ENCODE measurements at regions of chrX and their contacts with region 1.

Region 1: DNA sequence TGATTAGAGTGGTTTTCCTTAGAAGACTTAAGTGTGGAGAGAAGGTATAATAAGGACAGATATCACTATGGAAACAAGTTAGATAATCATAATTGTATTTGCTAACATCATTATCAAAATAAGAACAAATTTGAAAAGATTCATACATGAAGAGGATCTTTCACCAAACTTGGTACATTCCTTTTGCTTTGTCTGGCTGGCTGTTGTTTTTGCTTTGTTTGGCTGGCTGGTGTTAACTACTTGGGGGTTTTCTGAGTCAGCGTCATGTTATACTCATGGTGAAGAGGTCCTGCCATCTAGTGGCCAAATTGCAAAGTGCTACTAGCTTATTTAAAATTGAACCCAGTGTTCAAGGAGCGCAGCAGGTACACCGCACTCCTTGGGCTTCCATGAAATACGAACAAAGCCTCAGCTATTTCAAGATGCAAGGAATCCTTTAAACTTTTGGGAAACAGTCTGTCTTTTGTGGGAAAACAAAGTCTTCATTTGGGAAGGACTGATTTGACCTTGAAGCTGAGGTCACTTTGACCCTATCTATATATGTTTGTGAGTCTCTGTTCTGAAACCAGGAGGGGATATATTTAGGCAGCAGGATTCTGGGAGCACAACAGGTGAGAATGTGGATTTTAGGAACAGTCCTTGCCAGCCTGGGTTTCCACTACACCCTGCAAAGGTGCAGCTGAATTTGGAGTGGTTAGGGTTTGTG is 129.7 kb downstream of the PLS3 start:
- DNase-seq: peak; percentile 53
- H3K4me3 Mint-ChIP-seq: no peak overlapping the region
- H3K27ac Mint-ChIP-seq: no peak overlapping the region
- H3K4me1 Mint-ChIP-seq: no peaks in the 10 kb centered on the region
- H3K27me3 Mint-ChIP-seq: no peaks in the 10 kb centered on the region

Region 2: DNA sequence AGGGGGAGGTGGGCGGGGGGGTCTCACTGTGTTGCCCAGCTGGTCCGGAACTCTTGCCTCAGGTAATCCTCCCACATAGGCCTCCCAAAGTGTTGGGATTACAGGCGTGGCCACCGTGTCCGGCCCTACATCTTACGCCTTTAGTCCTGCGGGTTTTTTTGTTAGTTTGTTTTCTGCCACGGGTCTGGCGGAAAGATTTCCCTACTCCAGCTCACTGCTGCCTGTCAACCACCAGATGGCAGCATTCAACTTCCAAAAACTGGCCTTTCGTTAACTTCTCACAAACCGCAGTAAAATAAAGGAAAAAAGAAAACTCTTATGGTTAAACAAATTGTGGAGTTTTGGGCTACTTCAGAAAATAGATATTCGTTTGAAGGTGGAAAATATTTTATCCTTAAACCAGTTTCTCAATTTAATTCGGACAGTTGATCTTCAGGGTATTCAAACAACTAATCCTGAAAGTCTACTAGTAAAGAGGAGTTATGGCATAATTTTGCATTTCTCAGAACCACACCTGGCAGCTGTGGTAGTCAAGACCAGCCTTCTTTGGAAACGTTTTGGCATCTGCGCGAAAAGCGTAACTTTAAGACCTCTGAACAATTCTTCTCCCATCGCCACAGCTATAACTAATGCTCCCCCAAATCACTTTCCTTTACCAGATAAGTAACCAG is 360.0 kb before region 1 on chrX:
- CTCF ChIA-PET with region 1: interaction called, 3 read pairs
- intact Hi-C with region 1: loop called (anchors 1 kb)
- DNase-seq: peak; percentile 17
- H3K4me3 Mint-ChIP-seq: no peak overlapping the region
- H3K27ac Mint-ChIP-seq: no peak overlapping the region
- H3K4me1 Mint-ChIP-seq: no peaks in the 10 kb centered on the region
- H3K27me3 Mint-ChIP-seq: no peaks in the 10 kb centered on the region

Region 3: GRCh38 chrX:115650916-115651315 is 39.7 kb before region 1 on chrX:
- CTCF ChIA-PET with region 1: interaction called, 12 read pairs
- intact Hi-C with region 1: loop called (anchors 1 kb)
- DNase-seq: peak; percentile 35
- H3K4me3 Mint-ChIP-seq: no peak overlapping the region
- H3K27ac Mint-ChIP-seq: no peak overlapping the region
- H3K4me1 Mint-ChIP-seq: no peaks in the 10 kb centered on the region
- H3K27me3 Mint-ChIP-seq: no peaks in the 10 kb centered on the region

Region 4: GRCh38 chrX:116239944-116240840 is 549.5 kb after region 1 on chrX:
- CTCF ChIA-PET with region 1: no interaction called
- intact Hi-C with region 1: no loop called
- DNase-seq: no peak
- H3K4me3 Mint-ChIP-seq: no peak overlapping the region
- H3K27ac Mint-ChIP-seq: no peak overlapping the region
- H3K4me1 Mint-ChIP-seq: no peaks in the 10 kb centered on the region
- H3K27me3 Mint-ChIP-seq: no peaks in the 10 kb centered on the region

Measured in activated naive CD4-positive, alpha-beta T cell treated with anti-CD3 and anti-CD28 coated beads for 36 hours (primary cell).